Breast epithelium (tissue), 4 donors: ENCODE measurements at regions of chr11 and their contacts with region 1.

Region 1: DNA sequence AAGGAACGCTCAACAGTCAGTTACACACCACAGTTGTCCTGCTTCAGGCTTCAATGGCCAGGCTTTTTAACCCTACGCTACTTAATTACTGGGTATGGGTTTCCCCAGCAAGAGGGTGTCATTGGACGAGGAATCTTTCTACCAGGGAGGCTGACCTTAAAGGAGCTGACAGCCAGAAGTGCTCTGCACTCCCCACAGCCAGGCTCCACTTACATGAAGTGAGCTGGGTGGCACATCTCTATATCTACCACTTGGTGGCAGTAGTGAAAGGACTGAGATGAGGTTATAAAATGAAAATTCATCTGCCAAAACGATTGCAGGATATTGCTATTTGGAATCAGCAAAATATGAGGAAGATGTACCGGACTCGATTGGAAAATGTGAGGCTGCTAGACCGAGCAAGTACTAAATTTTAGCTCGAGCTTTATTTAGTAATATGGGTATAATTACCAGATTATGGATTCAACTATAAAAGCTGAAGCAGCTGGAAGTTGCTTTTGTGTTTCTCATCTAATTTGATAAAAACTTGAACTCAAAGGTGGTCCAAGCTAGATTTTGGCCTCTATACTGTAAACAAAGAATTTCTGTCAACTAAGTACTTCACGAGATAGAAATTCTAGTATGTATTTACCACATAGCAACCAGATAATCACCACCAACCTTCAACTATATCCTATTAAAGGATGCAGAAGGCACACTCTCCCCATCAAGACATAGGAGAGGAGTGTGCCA is 53.9 kb upstream of the CEP126 start:
- DNase-seq: peak in 1 of 2 donors; percentile 23
- H3K4me3 ChIP-seq: no peak overlapping the region
- H3K27ac ChIP-seq: no peak overlapping the region
- H3K4me1 ChIP-seq: no peaks in the 10 kb centered on the region
- H3K27me3 ChIP-seq: no peaks in the 10 kb centered on the region
- CTCF ChIP-seq: peak; percentile 49 to 76 (median 68)
- POLR2A ChIP-seq: no peak

Region 2: DNA sequence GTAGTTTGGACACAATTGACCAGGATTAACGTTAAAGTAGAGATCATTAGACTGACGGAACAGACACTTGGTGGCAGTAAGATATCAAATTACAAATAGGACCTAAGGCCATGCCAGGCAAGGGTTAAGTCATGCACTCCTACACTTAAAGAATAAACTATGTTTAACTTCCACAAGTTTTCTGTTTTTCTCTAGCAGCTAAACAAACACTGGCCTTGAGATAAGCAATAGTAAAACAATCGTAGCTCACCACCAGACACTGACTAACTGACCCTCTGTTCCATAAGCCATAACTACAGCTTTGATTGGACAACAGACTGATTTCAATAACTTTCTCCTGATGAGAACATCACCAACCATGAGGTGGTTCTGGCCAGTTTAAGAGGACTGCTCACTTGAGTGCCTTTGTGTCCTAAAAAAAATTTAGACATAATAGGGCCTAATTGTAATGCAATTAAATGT is 52.0 kb after region 1 on chr11:
- intact Hi-C with region 1: no loop called
- DNase-seq: no peak
- H3K4me3 ChIP-seq: no peak overlapping the region
- H3K27ac ChIP-seq: no peak overlapping the region
- H3K4me1 ChIP-seq: no peaks in the 10 kb centered on the region
- H3K27me3 ChIP-seq: no peaks in the 10 kb centered on the region
- CTCF ChIP-seq: no peak
- POLR2A ChIP-seq: no peak

Region 3: GRCh38 chr11:102010771-102011494 is 150.1 kb after region 1 on chr11:
- intact Hi-C with region 1: loop called (anchors 10 kb)
- DNase-seq: peak; percentile 39 to 69
- H3K4me3 ChIP-seq: no peak overlapping the region
- H3K27ac ChIP-seq: no peak overlapping the region
- H3K4me1 ChIP-seq: peaks cover 0 to 6% of the 10 kb centered on the region in 2 donors
- H3K27me3 ChIP-seq: no peaks in the 10 kb centered on the region
- CTCF ChIP-seq: no peak
- POLR2A ChIP-seq: no peak

Region 4: DNA sequence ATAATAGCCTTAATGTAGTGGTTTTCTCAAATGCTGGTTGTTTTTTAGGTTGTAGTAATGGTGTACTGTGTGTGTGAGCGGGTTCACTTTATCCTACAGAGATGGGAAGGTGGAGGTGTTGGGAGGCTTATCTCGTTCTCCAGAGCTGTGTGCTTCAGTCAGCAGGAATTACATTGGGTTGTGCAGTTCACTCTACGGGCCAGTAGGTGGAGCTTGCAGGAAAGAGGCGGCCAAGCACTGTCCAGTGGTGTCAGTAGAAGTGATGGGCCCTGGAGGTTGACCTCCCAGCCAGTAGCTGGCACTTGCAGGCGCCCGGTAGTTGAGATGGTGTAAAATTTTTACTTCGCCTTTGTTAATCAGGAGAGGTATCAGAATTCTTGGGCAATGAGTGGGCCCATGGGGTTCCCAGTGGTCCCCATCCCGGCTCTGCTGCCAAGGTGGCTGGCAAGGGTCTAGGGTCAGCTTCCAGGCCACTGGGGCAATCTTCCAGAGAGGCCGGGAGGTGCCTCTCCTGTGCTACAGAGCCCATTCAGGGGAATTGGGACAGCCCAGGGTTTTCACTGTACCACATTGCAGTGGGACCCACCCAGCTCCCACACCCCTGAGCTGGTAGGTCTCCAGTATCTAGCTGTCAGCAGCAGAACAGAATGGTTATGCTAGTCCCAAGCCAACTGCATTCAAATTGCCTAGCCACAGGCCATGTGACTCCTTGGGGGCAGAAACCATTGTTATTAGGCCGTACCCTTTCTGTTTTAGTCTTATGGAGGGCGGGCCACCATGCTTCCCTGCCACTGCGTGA is 530.0 kb after region 1 on chr11:
- intact Hi-C with region 1: no loop called
- DNase-seq: peak; percentile 35 to 56
- H3K4me3 ChIP-seq: no peak overlapping the region
- H3K27ac ChIP-seq: peak overlapping the region in 1 of 2 donors; percentile 45
- H3K4me1 ChIP-seq: no peaks in the 10 kb centered on the region
- H3K27me3 ChIP-seq: no peaks in the 10 kb centered on the region
- CTCF ChIP-seq: peak; percentile 61 to 78 (median 76)
- POLR2A ChIP-seq: no peak